Natural killer cell (primary cell): ENCODE measurements at regions of chr3 and their contacts with region 1.

Region 1: DNA sequence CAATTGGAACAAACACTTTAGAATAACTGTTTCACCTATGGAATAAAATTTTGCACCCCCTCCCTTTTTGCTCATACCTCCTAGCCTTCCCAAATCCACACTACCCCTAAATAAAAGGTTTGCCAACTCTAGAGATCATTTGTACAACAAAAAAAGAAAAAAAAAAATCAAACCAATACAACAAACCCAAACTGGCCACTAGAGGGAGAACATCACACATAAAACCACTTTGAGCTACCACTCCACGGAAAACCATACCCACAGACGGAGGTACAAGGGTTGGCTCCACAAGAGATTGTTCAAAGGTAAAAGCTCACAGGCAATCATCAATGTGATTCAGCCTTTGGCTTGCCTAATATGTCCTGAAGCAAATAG is 47.6 kb downstream of the SETMAR start:
- DNase-seq: peak; percentile 49 to 89
- ATAC-seq: peak; percentile 67 to 86 (median 79)
- H3K4me3 ChIP-seq: peak overlapping the region; percentile 60
- H3K4me3 Mint-ChIP-seq: peak overlapping the region; percentile 82
- H3K27ac ChIP-seq: peak overlapping the region; percentile 88
- H3K27ac Mint-ChIP-seq: peak overlapping the region; percentile 92 to 94
- H3K4me1 ChIP-seq: peaks cover 3% of the 10 kb centered on the region
- H3K4me1 Mint-ChIP-seq: peaks cover 19 to 25% of the 10 kb centered on the region in 2 donors
- H3K27me3 ChIP-seq: no peaks in the 10 kb centered on the region
- H3K27me3 Mint-ChIP-seq: no peaks in the 10 kb centered on the region
- CTCF ChIP-seq: peak; percentile 80

Region 2: DNA sequence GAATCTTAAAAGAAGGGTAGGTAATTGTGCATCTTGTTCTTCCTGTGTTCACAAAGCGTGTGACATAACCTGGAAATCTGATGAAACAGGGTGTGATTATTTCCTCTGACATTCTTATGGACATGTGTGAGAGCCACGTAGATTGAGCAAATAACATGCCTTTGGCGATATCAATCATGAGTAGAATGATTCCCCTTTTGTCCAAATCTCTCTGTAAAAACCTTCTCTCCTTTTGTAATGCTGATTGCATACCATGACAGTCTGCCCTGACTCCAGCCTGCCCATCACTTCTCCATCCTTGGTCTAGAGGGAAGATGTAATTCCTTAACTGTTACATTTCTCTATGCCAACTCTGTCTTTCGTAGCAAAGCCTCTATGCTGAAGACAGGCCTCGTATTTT is 1355.6 kb before region 1 on chr3:
- intact Hi-C with region 1: no loop called
- DNase-seq: no peak
- ATAC-seq: no peak
- H3K4me3 ChIP-seq: no peak overlapping the region
- H3K4me3 Mint-ChIP-seq: no peak overlapping the region
- H3K27ac ChIP-seq: no peak overlapping the region
- H3K27ac Mint-ChIP-seq: no peak overlapping the region
- H3K4me1 ChIP-seq: no peaks in the 10 kb centered on the region
- H3K4me1 Mint-ChIP-seq: no peaks in the 10 kb centered on the region
- H3K27me3 ChIP-seq: no peaks in the 10 kb centered on the region
- H3K27me3 Mint-ChIP-seq: peaks cover 0 to 5% of the 10 kb centered on the region in 2 donors
- CTCF ChIP-seq: no peak

Region 3: GRCh38 chr3:4245671-4246070 is 105.1 kb before region 1 on chr3:
- intact Hi-C with region 1: no loop called
- DNase-seq: no peak
- ATAC-seq: no peak
- H3K4me3 ChIP-seq: no peak overlapping the region
- H3K4me3 Mint-ChIP-seq: no peak overlapping the region
- H3K27ac ChIP-seq: no peak overlapping the region
- H3K27ac Mint-ChIP-seq: no peak overlapping the region
- H3K4me1 ChIP-seq: no peaks in the 10 kb centered on the region
- H3K4me1 Mint-ChIP-seq: no peaks in the 10 kb centered on the region
- H3K27me3 ChIP-seq: no peaks in the 10 kb centered on the region
- H3K27me3 Mint-ChIP-seq: no peaks in the 10 kb centered on the region
- CTCF ChIP-seq: no peak

Region 4: GRCh38 chr3:4466741-4467521 is 116.2 kb after region 1 on chr3 and contains the start of gene SUMF1:
- intact Hi-C with region 1: loop called (anchors 1 kb)
- DNase-seq: peak; percentile 72 to 84
- ATAC-seq: peak; percentile 94 to 99 (median 94)
- H3K4me3 ChIP-seq: peak within 1 kb of the TSS; percentile 84
- H3K4me3 Mint-ChIP-seq: peak within 1 kb of the TSS; percentile 87
- H3K27ac ChIP-seq: peak within 1 kb of the TSS; percentile 71
- H3K27ac Mint-ChIP-seq: peak within 1 kb of the TSS; percentile 78 to 89
- H3K4me1 ChIP-seq: peaks cover 8% of the 10 kb centered on the region
- H3K4me1 Mint-ChIP-seq: peaks cover 14 to 22% of the 10 kb centered on the region in 2 donors
- H3K27me3 ChIP-seq: no peaks in the 10 kb centered on the region
- H3K27me3 Mint-ChIP-seq: peaks cover 1% of the 10 kb centered on the region in 2 donors
- CTCF ChIP-seq: no peak
- total RNA-seq, gene SUMF1: 16.3 to 19.8 (median 19.3) TPM

Region 5: DNA sequence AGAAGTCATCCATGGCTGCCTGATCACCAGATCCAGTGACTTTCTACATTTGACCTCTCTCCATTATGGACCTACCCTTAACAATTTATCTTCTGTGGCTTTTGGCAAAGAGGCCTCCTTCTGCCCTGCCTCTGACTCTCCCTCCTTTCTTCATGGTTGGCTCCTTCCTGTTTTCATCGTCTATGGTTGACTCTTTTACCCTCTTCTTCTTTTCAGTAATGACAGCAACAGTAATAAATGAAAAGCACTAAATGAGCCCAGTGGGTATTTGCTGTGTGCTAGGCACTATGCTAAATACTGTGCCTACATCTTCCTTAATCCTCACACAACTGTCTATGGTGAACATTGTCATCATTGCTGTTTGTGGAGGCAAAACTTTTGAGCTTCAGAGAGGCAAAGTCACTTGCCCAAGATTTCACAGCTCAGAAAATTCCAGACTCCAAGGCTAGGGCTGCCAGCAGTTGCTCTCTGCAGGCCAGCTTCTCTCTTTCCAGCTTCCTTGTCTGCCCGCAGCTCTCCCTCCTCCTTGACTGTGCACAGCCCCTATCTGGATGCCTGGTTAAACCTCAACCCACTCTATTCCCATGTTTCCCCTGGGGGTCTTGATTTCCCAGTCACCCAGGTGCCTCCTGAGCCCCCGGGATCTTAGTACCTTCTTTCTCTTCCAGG is 167.0 kb after region 1 on chr3:
- intact Hi-C with region 1: loop called (anchors 2 kb)
- DNase-seq: no peak
- ATAC-seq: no peak
- H3K4me3 ChIP-seq: no peak overlapping the region
- H3K4me3 Mint-ChIP-seq: no peak overlapping the region
- H3K27ac ChIP-seq: peak overlapping the region; percentile 51
- H3K27ac Mint-ChIP-seq: peak overlapping the region; percentile 75 to 90
- H3K4me1 ChIP-seq: peaks cover 18% of the 10 kb centered on the region
- H3K4me1 Mint-ChIP-seq: peaks cover 24 to 31% of the 10 kb centered on the region in 2 donors
- H3K27me3 ChIP-seq: no peaks in the 10 kb centered on the region
- H3K27me3 Mint-ChIP-seq: no peaks in the 10 kb centered on the region
- CTCF ChIP-seq: no peak

Region 6: DNA sequence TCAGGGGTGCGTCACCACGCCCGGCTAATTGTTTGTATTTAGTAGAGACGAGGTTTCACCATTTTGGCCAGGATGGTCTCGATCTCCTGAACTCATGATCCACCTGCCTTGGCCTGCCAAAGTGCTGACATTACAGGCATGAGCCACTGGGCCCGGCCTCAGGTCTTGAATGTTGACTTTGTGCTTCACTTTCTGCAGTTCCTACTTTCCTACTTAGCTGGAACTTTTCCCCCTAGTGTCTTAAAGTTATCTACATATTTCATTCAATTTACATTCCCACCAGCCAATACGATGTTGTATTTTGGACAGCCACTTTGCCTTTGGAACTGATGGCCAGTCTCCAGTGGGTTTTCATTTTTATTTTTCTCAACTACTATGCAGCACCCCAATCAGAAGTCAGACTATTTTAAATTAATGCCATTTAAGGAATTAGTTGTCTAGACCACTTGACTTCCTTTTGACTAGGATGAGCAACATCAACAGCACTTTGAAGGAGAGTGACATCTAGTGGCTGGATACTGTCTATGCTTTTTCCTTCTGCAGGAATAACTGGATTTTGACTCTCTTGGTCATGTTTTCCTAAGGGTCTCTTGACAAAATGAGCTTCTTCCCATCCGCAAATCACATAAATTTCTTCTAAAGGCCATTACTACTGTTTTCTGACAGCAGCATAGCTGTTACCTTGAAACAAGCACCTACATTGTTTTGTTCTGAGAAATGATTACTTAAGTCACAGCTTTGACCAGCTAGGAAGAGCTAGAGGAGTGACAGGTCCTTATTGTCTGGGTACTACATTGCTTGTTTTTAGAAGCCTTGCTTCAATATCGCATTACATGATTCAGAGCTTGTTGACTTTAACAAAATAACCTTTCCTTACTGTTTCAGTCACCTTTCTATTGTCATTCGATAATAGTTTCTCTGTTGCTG is 282.6 kb after region 1 on chr3:
- intact Hi-C with region 1: loop called (anchors 1 kb)
- DNase-seq: peak in 1 of 2 donors; percentile 72
- ATAC-seq: peak; percentile 69 to 79 (median 76)
- H3K4me3 ChIP-seq: no peak overlapping the region
- H3K4me3 Mint-ChIP-seq: no peak overlapping the region
- H3K27ac ChIP-seq: no peak overlapping the region
- H3K27ac Mint-ChIP-seq: peak overlapping the region; percentile 16 to 63
- H3K4me1 ChIP-seq: no peaks in the 10 kb centered on the region
- H3K4me1 Mint-ChIP-seq: peaks cover 8 to 12% of the 10 kb centered on the region in 2 donors
- H3K27me3 ChIP-seq: no peaks in the 10 kb centered on the region
- H3K27me3 Mint-ChIP-seq: no peaks in the 10 kb centered on the region
- CTCF ChIP-seq: peak; percentile 76

Region 7: DNA sequence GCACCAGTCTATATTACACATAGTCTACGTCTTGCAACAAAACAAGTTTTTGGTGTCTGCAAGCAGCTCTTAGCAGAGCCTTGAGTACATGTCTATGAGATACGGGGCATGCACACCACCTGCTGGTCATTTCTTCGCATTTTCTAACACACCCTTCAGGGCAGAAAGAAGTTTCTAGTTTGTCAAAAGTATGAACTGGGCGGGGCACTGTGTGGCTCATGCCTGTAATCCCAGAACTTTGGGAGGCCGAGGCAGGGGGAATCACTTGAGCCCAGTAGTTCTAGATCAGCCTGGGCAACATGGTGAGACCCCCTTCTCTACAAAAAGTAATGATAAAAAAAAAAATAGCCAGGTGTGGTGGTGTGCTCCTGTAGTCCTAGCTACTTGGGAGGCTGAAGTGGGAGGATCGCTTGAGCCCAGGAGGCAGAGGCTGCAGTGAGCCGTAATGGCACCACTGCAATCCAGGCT is 707.1 kb after region 1 on chr3:
- intact Hi-C with region 1: loop called (anchors 2 kb)
- DNase-seq: peak; percentile 58 to 89
- ATAC-seq: peak; percentile 95 to 98 (median 96)
- H3K4me3 ChIP-seq: no peak overlapping the region
- H3K4me3 Mint-ChIP-seq: no peak overlapping the region
- H3K27ac ChIP-seq: no peak overlapping the region
- H3K27ac Mint-ChIP-seq: no peak overlapping the region
- H3K4me1 ChIP-seq: peaks cover 32% of the 10 kb centered on the region
- H3K4me1 Mint-ChIP-seq: peaks cover 17 to 31% of the 10 kb centered on the region in 2 donors
- H3K27me3 ChIP-seq: no peaks in the 10 kb centered on the region
- H3K27me3 Mint-ChIP-seq: peaks cover 4 to 7% of the 10 kb centered on the region in 2 donors
- CTCF ChIP-seq: peak; percentile 79